MCF 10A (cell line): ENCODE measurements at regions of chr7 and their contacts with region 1.

Region 1: GRCh38 chr7:128209229-128210035 is 31.6 kb upstream of the LEP start:
- DNase-seq: peak; percentile 80
- H3K4me3 Mint-ChIP-seq: no peak overlapping the region
- H3K27ac Mint-ChIP-seq: no peak overlapping the region
- H3K4me1 Mint-ChIP-seq: peaks cover 4% of the 10 kb centered on the region
- H3K27me3 Mint-ChIP-seq: no peaks in the 10 kb centered on the region
- CTCF ChIP-seq: peak; percentile 99

Region 2: GRCh38 chr7:127585044-127585953 is 624.1 kb before region 1 on chr7 and contains the start of gene GCC1:
- CTCF ChIA-PET with region 1: interaction called, 7 read pairs
- POLR2A ChIA-PET with region 1: interaction called, 3 read pairs
- intact Hi-C with region 1: loop called (anchors 5 kb)
- DNase-seq: peak; percentile 80
- H3K4me3 Mint-ChIP-seq: peak within 1 kb of the TSS; percentile 79
- H3K27ac Mint-ChIP-seq: peak within 1 kb of the TSS; percentile 90
- H3K4me1 Mint-ChIP-seq: peaks cover 38% of the 10 kb centered on the region
- H3K27me3 Mint-ChIP-seq: no peaks in the 10 kb centered on the region
- CTCF ChIP-seq: no peak
- total RNA-seq, gene GCC1: 27.7 and 30.2 TPM in 2 replicates

Region 3: GRCh38 chr7:127726476-127726875 is 483.0 kb before region 1 on chr7:
- CTCF ChIA-PET with region 1: interaction called, 12 read pairs
- POLR2A ChIA-PET with region 1: no interaction called
- intact Hi-C with region 1: no loop called
- DNase-seq: no peak
- H3K4me3 Mint-ChIP-seq: no peak overlapping the region
- H3K27ac Mint-ChIP-seq: no peak overlapping the region
- H3K4me1 Mint-ChIP-seq: peaks cover 3% of the 10 kb centered on the region
- H3K27me3 Mint-ChIP-seq: no peaks in the 10 kb centered on the region
- CTCF ChIP-seq: no peak

Region 4: GRCh38 chr7:128020159-128020558 is 189.3 kb before region 1 on chr7:
- CTCF ChIA-PET with region 1: interaction called, 27 read pairs
- POLR2A ChIA-PET with region 1: no interaction called
- intact Hi-C with region 1: loop called (anchors 1 kb)
- DNase-seq: no peak
- H3K4me3 Mint-ChIP-seq: no peak overlapping the region
- H3K27ac Mint-ChIP-seq: no peak overlapping the region
- H3K4me1 Mint-ChIP-seq: peaks cover 64% of the 10 kb centered on the region
- H3K27me3 Mint-ChIP-seq: no peaks in the 10 kb centered on the region
- CTCF ChIP-seq: peak; percentile 27

Region 5: GRCh38 chr7:128122576-128123290 is 86.7 kb before region 1 on chr7:
- CTCF ChIA-PET with region 1: interaction called, 24 read pairs
- POLR2A ChIA-PET with region 1: no interaction called
- intact Hi-C with region 1: no loop called
- DNase-seq: peak; percentile 72
- H3K4me3 Mint-ChIP-seq: no peak overlapping the region
- H3K27ac Mint-ChIP-seq: no peak overlapping the region
- H3K4me1 Mint-ChIP-seq: peaks cover 8% of the 10 kb centered on the region
- H3K27me3 Mint-ChIP-seq: no peaks in the 10 kb centered on the region
- CTCF ChIP-seq: no peak

Region 6: GRCh38 chr7:128145191-128145590 is 64.2 kb before region 1 on chr7:
- CTCF ChIA-PET with region 1: interaction called, 23 read pairs
- POLR2A ChIA-PET with region 1: no interaction called
- intact Hi-C with region 1: no loop called
- DNase-seq: no peak
- H3K4me3 Mint-ChIP-seq: no peak overlapping the region
- H3K27ac Mint-ChIP-seq: no peak overlapping the region
- H3K4me1 Mint-ChIP-seq: peaks cover 10% of the 10 kb centered on the region
- H3K27me3 Mint-ChIP-seq: peaks cover 23% of the 10 kb centered on the region
- CTCF ChIP-seq: no peak

Region 7: DNA sequence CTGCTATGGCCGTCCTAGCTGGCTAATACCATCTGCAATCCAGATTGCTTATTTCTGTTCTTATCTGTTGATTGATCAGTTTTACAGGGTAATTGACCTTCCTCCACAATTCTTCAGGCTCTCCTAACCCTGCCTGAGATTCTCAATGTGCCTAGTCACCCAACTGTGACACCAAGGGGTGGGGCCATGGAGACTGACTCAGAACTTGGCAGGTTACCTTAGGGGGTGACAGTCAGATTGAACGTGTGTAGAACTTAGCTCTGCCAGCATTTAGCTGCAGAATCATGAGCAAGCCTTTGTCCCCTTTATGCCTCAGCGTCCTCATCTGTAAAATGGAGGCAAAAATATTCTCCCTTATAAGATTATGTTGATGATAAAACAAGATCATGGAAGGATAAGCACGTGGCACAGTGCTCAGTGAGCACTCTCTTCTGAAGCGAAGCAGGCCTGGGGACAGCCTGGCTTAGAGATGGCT is 12.5 kb after region 1 on chr7:
- CTCF ChIA-PET with region 1: interaction called, 24 read pairs
- POLR2A ChIA-PET with region 1: interaction called, 7 read pairs
- intact Hi-C with region 1: no loop called
- DNase-seq: peak; percentile 75
- H3K4me3 Mint-ChIP-seq: no peak overlapping the region
- H3K27ac Mint-ChIP-seq: no peak overlapping the region
- H3K4me1 Mint-ChIP-seq: peaks cover 36% of the 10 kb centered on the region
- H3K27me3 Mint-ChIP-seq: no peaks in the 10 kb centered on the region
- CTCF ChIP-seq: no peak

Region 8: GRCh38 chr7:128304212-128304611 is 94.8 kb after region 1 on chr7:
- CTCF ChIA-PET with region 1: no interaction called
- POLR2A ChIA-PET with region 1: no interaction called
- intact Hi-C with region 1: no loop called
- DNase-seq: no peak
- H3K4me3 Mint-ChIP-seq: no peak overlapping the region
- H3K27ac Mint-ChIP-seq: no peak overlapping the region
- H3K4me1 Mint-ChIP-seq: no peaks in the 10 kb centered on the region
- H3K27me3 Mint-ChIP-seq: no peaks in the 10 kb centered on the region
- CTCF ChIP-seq: no peak

Region 9: GRCh38 chr7:128347647-128348097 is 138.2 kb after region 1 on chr7:
- CTCF ChIA-PET with region 1: no interaction called
- POLR2A ChIA-PET with region 1: no interaction called
- intact Hi-C with region 1: no loop called
- DNase-seq: peak; percentile 76
- H3K4me3 Mint-ChIP-seq: no peak overlapping the region
- H3K27ac Mint-ChIP-seq: peak overlapping the region; percentile 2
- H3K4me1 Mint-ChIP-seq: peaks cover 11% of the 10 kb centered on the region
- H3K27me3 Mint-ChIP-seq: peaks cover 16% of the 10 kb centered on the region
- CTCF ChIP-seq: peak; percentile 93